PC-9 (cell line): ENCODE measurements at regions of chr9 and their contacts with region 1.

Region 1: GRCh38 chr9:112333639-112334431 is 416 bp upstream of the PTBP3 start:
- DNase-seq: peak; percentile 73 to 96
- H3K4me3 ChIP-seq: peak overlapping the region; percentile 89
- H3K27ac ChIP-seq: peak overlapping the region; percentile 90
- H3K4me1 ChIP-seq: peaks cover 49% of the 10 kb centered on the region
- H3K27me3 ChIP-seq: no peaks in the 10 kb centered on the region
- CTCF ChIP-seq: peak; percentile 57

Region 2: DNA sequence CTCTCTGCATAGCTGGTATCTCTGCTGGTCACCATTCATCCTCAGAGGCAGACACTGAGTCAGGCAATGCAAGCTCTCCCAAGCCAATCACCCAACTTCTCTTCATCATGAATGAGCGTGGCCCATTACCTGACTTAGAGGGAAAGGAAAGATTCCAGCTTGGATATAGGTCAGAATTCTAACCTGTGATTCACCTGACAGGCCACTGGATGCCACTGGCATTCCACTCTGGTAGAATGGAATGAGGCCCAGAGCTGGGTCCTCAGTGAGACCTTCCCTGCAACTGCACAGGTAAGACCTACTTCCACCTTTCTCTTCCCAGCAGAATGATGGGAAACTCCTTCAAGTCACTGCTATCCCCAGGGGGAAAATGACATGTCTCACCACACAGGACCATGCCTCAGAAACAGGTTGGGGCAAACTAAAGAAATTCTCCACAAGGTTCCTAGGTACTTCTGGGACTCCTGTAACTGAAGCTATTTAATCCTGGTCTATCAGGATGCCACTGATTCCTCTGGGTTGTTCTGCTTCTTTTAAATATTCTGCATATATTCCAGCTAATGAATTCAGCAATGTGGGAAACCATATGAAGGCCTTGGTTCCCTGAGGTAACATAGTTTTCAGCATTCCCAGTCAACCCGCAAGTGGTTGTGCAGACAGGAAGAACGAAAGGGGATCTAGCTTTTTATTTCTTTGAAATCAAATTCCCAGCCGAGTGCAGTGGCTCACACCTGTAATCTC is 220.7 kb before region 1 on chr9:
- CTCF ChIA-PET with region 1: interaction called, 6 read pairs
- POLR2A ChIA-PET with region 1: no interaction called
- intact Hi-C with region 1: loop called (anchors 1 kb)
- DNase-seq: peak; percentile 73 to 87
- H3K4me3 ChIP-seq: no peak overlapping the region
- H3K27ac ChIP-seq: peak overlapping the region; percentile 95
- H3K4me1 ChIP-seq: peaks cover 62% of the 10 kb centered on the region
- H3K27me3 ChIP-seq: no peaks in the 10 kb centered on the region
- CTCF ChIP-seq: peak; percentile 85

Region 3: DNA sequence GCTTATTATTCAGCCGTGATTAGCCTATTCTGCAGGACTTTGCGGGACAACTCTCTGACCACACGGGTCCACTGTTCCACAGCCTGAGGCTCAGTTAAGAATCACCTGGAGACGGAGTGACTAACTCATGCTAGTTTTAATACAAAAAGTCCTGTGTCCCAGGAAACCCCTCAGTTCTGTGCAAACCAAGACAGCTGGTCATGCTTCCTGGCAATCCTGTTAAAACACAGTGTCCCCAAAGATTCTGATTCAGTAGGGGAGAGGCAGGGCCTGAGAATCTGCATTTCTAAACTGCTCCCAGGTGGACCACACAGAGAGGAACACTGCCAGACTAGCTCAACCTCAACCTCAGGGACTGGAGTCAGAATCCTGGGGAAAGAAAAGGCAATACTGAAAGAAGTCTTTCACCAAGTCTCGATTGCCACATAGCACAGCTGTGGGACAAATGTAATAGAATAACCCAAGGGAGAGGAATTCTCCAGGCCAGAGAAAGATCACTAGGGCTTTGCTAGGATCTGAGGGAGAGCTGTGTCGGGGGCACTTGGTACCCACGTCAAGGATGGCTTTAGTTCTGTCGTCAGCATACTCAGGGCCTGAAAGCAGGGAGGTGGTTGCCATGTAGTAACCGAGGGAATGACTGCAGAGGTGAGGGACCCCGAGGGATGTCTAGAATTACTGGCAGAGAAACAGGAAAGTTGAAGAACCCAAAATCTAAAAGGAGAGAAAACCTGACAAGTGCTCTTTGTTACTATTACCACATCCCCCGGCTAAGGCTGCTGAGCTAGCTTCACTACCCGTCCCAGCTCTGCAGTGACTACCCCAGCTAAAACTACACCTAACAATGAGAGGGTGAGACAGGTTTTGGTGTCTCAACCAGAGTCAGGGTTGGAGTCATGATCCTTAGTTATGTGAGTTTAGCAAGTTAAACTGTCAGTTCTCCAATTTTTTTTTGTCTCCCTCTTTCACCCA is 167.4 kb before region 1 on chr9:
- CTCF ChIA-PET with region 1: no interaction called
- POLR2A ChIA-PET with region 1: interaction called, 3 read pairs
- intact Hi-C with region 1: loop called (anchors 2 kb)
- DNase-seq: peak; percentile 61 to 83
- H3K4me3 ChIP-seq: no peak overlapping the region
- H3K27ac ChIP-seq: peak overlapping the region; percentile 70
- H3K4me1 ChIP-seq: peaks cover 60% of the 10 kb centered on the region
- H3K27me3 ChIP-seq: no peaks in the 10 kb centered on the region
- CTCF ChIP-seq: no peak; the same call in 1 of the 2 replicates

Region 4: DNA sequence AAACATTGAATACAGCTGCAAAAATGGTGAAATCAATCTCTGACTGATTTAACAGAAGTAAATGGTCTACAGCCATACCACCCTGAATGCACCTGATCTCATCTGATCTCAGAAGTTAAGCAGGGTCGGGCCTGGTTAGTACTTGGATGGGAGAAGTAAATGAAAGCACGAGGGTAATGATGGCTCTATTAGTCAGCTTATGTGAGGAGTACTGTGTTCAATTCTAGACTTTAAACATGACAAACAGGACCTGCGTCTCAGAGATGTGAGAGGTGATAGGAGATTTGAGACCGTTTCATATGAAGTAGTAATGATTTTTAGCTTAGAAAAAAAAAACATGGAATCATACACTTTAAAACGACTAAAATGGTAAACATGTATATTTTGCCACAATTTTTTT is 81.6 kb before region 1 on chr9:
- CTCF ChIA-PET with region 1: no interaction called
- POLR2A ChIA-PET with region 1: no interaction called
- intact Hi-C with region 1: loop called (anchors 5 kb)
- DNase-seq: no peak
- H3K4me3 ChIP-seq: no peak overlapping the region
- H3K27ac ChIP-seq: peak overlapping the region; percentile 21; the same call in 1 of the 2 replicates
- H3K4me1 ChIP-seq: peaks cover 21% of the 10 kb centered on the region
- H3K27me3 ChIP-seq: no peaks in the 10 kb centered on the region
- CTCF ChIP-seq: no peak

Region 5: GRCh38 chr9:112379177-112380101 is 45.6 kb after region 1 on chr9:
- CTCF ChIA-PET with region 1: no interaction called
- POLR2A ChIA-PET with region 1: interaction called, 6 read pairs
- intact Hi-C with region 1: loop called (anchors 5 kb)
- DNase-seq: peak; percentile 92 to 100
- H3K4me3 ChIP-seq: peak overlapping the region; percentile 95
- H3K27ac ChIP-seq: peak overlapping the region; percentile 75
- H3K4me1 ChIP-seq: peaks cover 28% of the 10 kb centered on the region
- H3K27me3 ChIP-seq: no peaks in the 10 kb centered on the region
- CTCF ChIP-seq: no peak

Region 6: GRCh38 chr9:112717661-112718341 is 384.0 kb after region 1 on chr9 and contains the start of gene INIP:
- CTCF ChIA-PET with region 1: no interaction called
- POLR2A ChIA-PET with region 1: no interaction called
- intact Hi-C with region 1: loop called (anchors 10 kb)
- DNase-seq: peak; percentile 93 to 99
- H3K4me3 ChIP-seq: peak within 1 kb of the TSS; percentile 77
- H3K27ac ChIP-seq: peak within 1 kb of the TSS; percentile 48
- H3K4me1 ChIP-seq: peaks cover 16% of the 10 kb centered on the region; the same call in 1 of the 2 replicates
- H3K27me3 ChIP-seq: no peaks in the 10 kb centered on the region
- CTCF ChIP-seq: no peak; the same call in 1 of the 2 replicates
- total RNA-seq, gene INIP: 24.0 and 28.0 TPM in 2 replicates

Region 7: DNA sequence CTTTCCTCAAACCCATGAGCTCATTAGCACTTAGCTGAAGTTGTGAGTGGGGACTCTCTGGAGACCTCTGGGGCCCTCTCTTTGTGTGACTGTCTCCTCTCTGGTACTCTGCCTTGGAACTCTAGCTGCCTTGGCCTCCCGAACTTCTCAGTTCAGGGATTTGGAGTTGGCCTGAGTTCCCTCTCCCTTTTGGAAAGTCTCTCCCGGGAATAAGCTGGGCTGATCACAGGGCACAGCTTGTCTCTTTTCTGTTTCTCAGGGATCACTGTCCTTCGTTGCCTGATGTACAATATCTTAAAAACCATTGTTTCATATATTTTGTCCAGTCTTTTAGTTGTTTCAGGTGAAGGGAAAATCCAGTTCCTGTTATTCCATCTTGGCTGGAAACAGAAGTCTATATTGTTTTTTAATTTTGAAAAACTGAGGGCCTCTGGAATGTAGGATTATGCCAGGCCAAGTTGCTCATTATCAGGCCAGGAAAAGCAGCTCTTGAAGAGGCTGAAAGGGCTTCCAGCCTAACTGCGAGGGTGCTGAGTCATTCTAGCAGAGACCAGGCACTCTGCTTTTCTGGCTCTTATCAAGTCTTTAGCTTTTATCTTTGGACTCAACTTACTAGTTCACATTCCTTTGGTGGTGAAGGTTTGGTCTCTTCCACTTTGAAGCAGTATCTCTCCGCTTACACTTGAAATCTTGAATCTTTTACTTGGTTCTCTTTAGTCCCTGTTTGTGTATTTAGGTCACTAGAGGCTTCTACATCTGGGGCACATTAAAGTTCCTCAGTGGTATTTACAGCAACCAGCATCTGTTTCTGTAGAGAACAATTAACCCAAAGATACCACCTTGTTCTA is 1121.3 kb after region 1 on chr9:
- CTCF ChIA-PET with region 1: no interaction called
- POLR2A ChIA-PET with region 1: interaction called, 16 read pairs
- intact Hi-C with region 1: no loop called
- DNase-seq: peak; percentile 68 to 79
- H3K4me3 ChIP-seq: no peak overlapping the region
- H3K27ac ChIP-seq: peak overlapping the region; percentile 85
- H3K4me1 ChIP-seq: peaks cover 28% of the 10 kb centered on the region
- H3K27me3 ChIP-seq: no peaks in the 10 kb centered on the region
- CTCF ChIP-seq: no peak